HCT116 (cell line): ENCODE measurements at regions of chr3 and their contacts with region 1.

Region 1: DNA sequence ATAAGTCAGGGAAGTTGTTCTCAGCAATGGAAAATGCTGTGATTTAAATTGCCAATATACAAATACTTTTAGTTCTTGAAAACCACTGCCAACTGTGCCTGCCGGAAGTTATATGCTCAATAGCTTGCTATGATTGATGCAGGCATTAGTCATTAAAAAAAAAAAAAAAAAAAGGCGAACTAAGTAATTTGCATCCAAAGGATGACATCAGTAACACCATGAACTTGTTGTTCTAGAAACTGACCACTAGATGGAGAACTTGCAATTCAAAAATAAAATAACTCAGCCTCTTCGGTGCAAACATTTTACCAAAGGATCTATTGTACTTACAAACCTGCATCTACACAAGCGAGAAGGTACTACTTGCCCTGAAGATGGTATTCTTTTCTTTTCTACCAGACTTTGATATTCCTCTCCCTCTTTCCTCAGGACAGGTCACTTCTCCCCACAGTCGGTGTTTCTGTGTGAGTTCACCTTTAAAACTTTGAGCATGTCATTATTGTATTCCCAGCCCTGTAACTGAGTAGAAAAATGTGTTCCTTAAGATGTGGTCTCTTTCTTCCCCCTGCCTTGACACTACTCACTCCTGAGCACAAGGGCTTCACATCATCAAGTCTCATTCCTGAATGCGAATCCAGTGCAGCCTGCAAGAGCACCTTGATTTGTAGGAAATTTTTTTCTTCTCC is 115.0 kb upstream of the VEPH1 start:
- DNase-seq: peak; percentile 61
- ATAC-seq: peak; percentile 80
- H3K4me3 ChIP-seq: no peak overlapping the region
- H3K27ac ChIP-seq: no peak overlapping the region
- H3K4me1 ChIP-seq: peaks cover 0 to 5% of the 10 kb centered on the region in 2 experiments; a peak in 1 of 4 replicates
- H3K27me3 ChIP-seq: no peaks in the 10 kb centered on the region
- CTCF ChIP-seq: peak; percentile 53 to 71 (median 57); a peak in 5 of 6 replicates
- POLR2A ChIP-seq: no peak
- RAD21 ChIP-seq: peak; percentile 81

Region 2: GRCh38 chr3:157589211-157589610 is 29.0 kb before region 1 on chr3:
- CTCF ChIA-PET with region 1: no interaction called
- POLR2A ChIA-PET with region 1: no interaction called
- RAD21 ChIA-PET with region 1: no interaction called
- intact Hi-C with region 1: no loop called
- DNase-seq: no peak
- ATAC-seq: no peak
- H3K4me3 ChIP-seq: no peak overlapping the region
- H3K27ac ChIP-seq: no peak overlapping the region
- H3K4me1 ChIP-seq: no peaks in the 10 kb centered on the region
- H3K27me3 ChIP-seq: no peaks in the 10 kb centered on the region
- CTCF ChIP-seq: no peak
- POLR2A ChIP-seq: no peak
- RAD21 ChIP-seq: no peak

Region 3: GRCh38 chr3:157692468-157692867 is 74.2 kb after region 1 on chr3:
- CTCF ChIA-PET with region 1: no interaction called
- POLR2A ChIA-PET with region 1: no interaction called
- RAD21 ChIA-PET with region 1: no interaction called
- intact Hi-C with region 1: no loop called
- DNase-seq: no peak
- ATAC-seq: no peak
- H3K4me3 ChIP-seq: no peak overlapping the region
- H3K27ac ChIP-seq: no peak overlapping the region
- H3K4me1 ChIP-seq: no peaks in the 10 kb centered on the region
- H3K27me3 ChIP-seq: no peaks in the 10 kb centered on the region
- CTCF ChIP-seq: no peak
- POLR2A ChIP-seq: no peak
- RAD21 ChIP-seq: no peak

Region 4: GRCh38 chr3:158434412-158435038 is 816.3 kb after region 1 on chr3:
- CTCF ChIA-PET with region 1: interaction called, 5 read pairs
- POLR2A ChIA-PET with region 1: no interaction called
- RAD21 ChIA-PET with region 1: no interaction called
- intact Hi-C with region 1: loop called (anchors 1 kb)
- DNase-seq: peak; percentile 37
- ATAC-seq: peak; percentile 87
- H3K4me3 ChIP-seq: no peak overlapping the region
- H3K27ac ChIP-seq: no peak overlapping the region
- H3K4me1 ChIP-seq: no peaks in the 10 kb centered on the region
- H3K27me3 ChIP-seq: no peaks in the 10 kb centered on the region
- CTCF ChIP-seq: peak; percentile 62 to 77 (median 70); a peak in 5 of 6 replicates
- POLR2A ChIP-seq: no peak
- RAD21 ChIP-seq: peak; percentile 81

Region 5: DNA sequence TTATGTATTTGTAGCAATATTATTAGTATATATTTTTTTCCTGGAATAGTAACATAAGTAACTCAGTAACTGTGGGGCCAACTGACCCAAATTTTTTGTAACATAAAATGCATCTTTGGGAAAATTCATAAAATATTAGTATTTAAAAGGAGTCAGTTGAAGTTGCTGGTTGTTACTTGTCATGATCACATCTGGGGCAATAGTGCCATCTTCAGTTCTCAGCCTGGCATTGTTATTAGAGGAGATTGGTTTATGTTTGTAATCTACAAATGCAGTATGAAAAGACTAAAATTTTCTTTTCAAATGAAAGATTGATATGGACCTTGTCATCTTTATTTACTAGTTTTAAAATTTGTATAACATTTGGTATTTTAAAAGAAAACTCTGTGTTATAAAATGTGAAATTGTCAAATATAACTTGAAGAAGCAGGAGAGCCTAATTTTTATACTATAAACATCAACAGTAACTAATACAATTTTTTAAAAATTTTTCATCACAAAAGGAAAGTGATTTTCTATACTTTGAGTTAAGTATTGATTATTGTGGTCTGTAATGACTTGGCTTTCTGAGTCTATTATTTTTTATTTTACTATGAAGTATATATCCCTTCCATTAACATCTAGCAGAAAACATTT is 914.0 kb after region 1 on chr3:
- CTCF ChIA-PET with region 1: interaction called, 6 read pairs
- POLR2A ChIA-PET with region 1: no interaction called
- RAD21 ChIA-PET with region 1: no interaction called
- intact Hi-C with region 1: loop called (anchors 2 kb)
- DNase-seq: peak; percentile 41
- ATAC-seq: peak; percentile 62; the same call in 1 of the 2 replicates
- H3K4me3 ChIP-seq: no peak overlapping the region
- H3K27ac ChIP-seq: no peak overlapping the region
- H3K4me1 ChIP-seq: no peaks in the 10 kb centered on the region
- H3K27me3 ChIP-seq: no peaks in the 10 kb centered on the region
- CTCF ChIP-seq: peak; percentile 54 to 67 (median 63); a peak in 5 of 6 replicates
- POLR2A ChIP-seq: no peak
- RAD21 ChIP-seq: peak; percentile 80